GM23248 (cell line): ENCODE measurements at regions of chr4 and their contacts with region 1.

Region 1: DNA sequence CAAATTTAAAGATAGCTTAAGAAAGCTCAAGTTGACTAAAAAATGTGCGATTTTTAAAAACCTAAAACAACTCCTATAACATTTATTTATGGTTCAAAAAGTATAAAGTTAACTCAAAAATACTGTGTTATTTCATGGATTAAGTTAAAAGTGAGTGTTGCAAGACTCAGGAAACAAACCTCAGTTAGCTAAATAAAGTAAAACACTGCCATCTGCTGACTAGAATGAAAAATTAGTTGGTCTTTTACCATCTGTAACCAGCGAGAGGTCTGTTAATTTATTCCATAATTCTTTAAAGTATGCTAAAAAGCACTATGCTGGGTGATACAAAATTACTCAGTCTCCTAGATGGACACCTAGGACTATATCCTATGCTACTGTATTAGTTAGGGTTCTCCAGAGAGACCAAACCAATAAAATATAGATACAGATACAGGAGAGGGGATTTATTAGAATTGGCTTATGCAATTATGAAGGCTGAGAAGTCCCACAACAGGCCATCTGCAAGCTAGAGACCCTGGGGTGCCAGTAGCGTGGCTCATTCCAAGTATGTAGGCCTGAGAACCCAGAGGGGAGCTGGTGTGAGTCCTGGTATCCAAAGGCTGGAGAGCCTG is 4.9 kb upstream of the WDFY3 start:
- DNase-seq: peak; percentile 83
- H3K4me3 ChIP-seq: no peak overlapping the region
- H3K27ac ChIP-seq: no peak overlapping the region
- H3K4me1 ChIP-seq: peaks cover 11% of the 10 kb centered on the region
- H3K27me3 ChIP-seq: no peaks in the 10 kb centered on the region

Region 2: DNA sequence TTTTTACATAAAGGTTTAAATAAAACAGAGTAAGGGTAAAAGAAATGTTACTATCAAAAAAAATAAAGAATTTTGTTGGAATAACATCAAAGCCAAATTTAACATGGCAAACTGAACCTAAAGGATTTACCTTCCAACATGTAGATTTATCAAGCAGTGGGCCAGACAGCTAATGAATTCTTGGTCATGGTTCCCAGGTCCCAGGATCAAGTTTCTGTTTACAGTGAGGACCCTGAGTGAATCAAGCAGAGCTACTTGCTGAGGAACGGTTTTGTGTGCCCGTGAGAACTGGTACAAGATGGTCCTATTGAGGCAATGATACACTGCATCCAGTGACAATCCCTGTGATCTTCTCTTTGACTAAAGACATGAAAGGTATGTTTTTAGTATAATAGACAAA is 231.4 kb before region 1 on chr4:
- in situ Hi-C with region 1: loop called (anchors 10 kb)
- DNase-seq: no peak
- H3K4me3 ChIP-seq: no peak overlapping the region
- H3K27ac ChIP-seq: no peak overlapping the region
- H3K4me1 ChIP-seq: no peaks in the 10 kb centered on the region
- H3K27me3 ChIP-seq: no peaks in the 10 kb centered on the region